ENCODE measurements at regions of chr12 and their contacts with region 1.

Region 1: GRCh38 chr12:50055831-50056638 is 1.4 kb upstream of the ASIC1 start:
- DNase-seq: peak; percentile 75 to 76
- H3K4me3 ChIP-seq: peak overlapping the region; percentile 20
- H3K4me3 Mint-ChIP-seq: peak overlapping the region; percentile 94
- H3K27ac Mint-ChIP-seq: peak overlapping the region; percentile 40
- H3K4me1 ChIP-seq: peaks cover 22% of the 10 kb centered on the region
- H3K4me1 Mint-ChIP-seq: peaks cover 24% of the 10 kb centered on the region
- H3K27me3 ChIP-seq: no peaks in the 10 kb centered on the region
- H3K27me3 Mint-ChIP-seq: peaks cover 2% of the 10 kb centered on the region
- CTCF ChIP-seq: peak; percentile 99

Region 2: GRCh38 chr12:49279706-49280159 is 776.3 kb before region 1 on chr12:
- CTCF ChIA-PET with region 1: no interaction called
- POLR2A ChIA-PET with region 1: no interaction called
- intact Hi-C with region 1: no loop called
- DNase-seq: no peak
- H3K4me3 ChIP-seq: no peak overlapping the region
- H3K4me3 Mint-ChIP-seq: no peak overlapping the region
- H3K27ac Mint-ChIP-seq: no peak overlapping the region
- H3K4me1 ChIP-seq: peaks cover 15% of the 10 kb centered on the region
- H3K4me1 Mint-ChIP-seq: peaks cover 13% of the 10 kb centered on the region
- H3K27me3 ChIP-seq: no peaks in the 10 kb centered on the region
- H3K27me3 Mint-ChIP-seq: no peaks in the 10 kb centered on the region
- CTCF ChIP-seq: no peak

Region 3: GRCh38 chr12:49776413-49776812 is 279.6 kb before region 1 on chr12:
- CTCF ChIA-PET with region 1: no interaction called
- POLR2A ChIA-PET with region 1: no interaction called
- intact Hi-C with region 1: loop called (anchors 5 kb)
- DNase-seq: peak; percentile 76 to 84
- H3K4me3 ChIP-seq: no peak overlapping the region
- H3K4me3 Mint-ChIP-seq: no peak overlapping the region
- H3K27ac Mint-ChIP-seq: peak overlapping the region; percentile 37
- H3K4me1 ChIP-seq: no peaks in the 10 kb centered on the region
- H3K4me1 Mint-ChIP-seq: peaks cover 10% of the 10 kb centered on the region
- H3K27me3 ChIP-seq: no peaks in the 10 kb centered on the region
- H3K27me3 Mint-ChIP-seq: peaks cover 8% of the 10 kb centered on the region
- CTCF ChIP-seq: peak; percentile 86 to 93

Region 4: DNA sequence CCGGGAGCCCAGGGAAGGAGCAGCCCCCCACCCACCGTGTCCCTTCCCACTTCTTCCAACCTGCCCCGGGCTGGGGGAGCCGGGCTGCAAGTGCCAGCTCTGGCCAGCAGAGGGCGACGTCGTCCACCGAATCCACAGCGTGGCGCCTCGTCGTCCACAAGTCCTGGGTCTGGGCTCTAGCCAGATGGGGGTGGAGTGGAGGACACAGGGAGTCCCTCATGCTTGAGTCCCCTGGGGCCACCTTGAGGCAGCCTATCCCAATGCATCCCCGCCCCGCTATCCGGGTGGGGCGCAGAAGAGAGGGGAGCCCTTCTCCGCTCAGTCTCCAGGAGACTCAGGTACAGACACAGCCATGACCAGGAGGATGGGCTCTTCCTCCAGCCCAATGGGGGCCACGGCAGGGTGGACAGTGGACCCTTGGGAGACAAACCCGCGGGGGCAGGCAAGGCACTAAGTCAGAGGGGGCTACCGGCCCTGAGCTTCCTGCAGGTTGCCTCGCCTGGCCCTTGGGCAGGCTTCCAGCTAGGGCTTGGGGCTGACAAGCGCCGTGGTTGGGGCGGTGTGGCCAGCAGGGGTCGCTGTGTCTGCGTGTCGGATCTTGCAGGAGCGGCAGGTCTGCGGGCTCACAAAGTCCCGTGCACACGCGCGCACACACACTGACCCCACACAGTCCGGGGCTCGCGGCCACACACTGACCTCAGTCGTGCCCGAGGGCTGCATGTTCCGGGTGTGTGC is 88.8 kb before region 1 on chr12:
- CTCF ChIA-PET with region 1: interaction called, 27 read pairs
- POLR2A ChIA-PET with region 1: no interaction called
- intact Hi-C with region 1: loop called (anchors 1 kb)
- DNase-seq: peak; percentile 88 to 92
- H3K4me3 ChIP-seq: peak overlapping the region; percentile 18
- H3K4me3 Mint-ChIP-seq: peak overlapping the region; percentile 34
- H3K27ac Mint-ChIP-seq: peak overlapping the region; percentile 33
- H3K4me1 ChIP-seq: peaks cover 20% of the 10 kb centered on the region
- H3K4me1 Mint-ChIP-seq: no peaks in the 10 kb centered on the region
- H3K27me3 ChIP-seq: no peaks in the 10 kb centered on the region
- H3K27me3 Mint-ChIP-seq: no peaks in the 10 kb centered on the region
- CTCF ChIP-seq: peak; percentile 94 to 98

Region 5: GRCh38 chr12:49982246-49983087 is 73.6 kb before region 1 on chr12:
- CTCF ChIA-PET with region 1: interaction called, 10 read pairs
- POLR2A ChIA-PET with region 1: no interaction called
- intact Hi-C with region 1: no loop called
- DNase-seq: no peak
- H3K4me3 ChIP-seq: no peak overlapping the region
- H3K4me3 Mint-ChIP-seq: no peak overlapping the region
- H3K27ac Mint-ChIP-seq: no peak overlapping the region
- H3K4me1 ChIP-seq: peaks cover 19% of the 10 kb centered on the region
- H3K4me1 Mint-ChIP-seq: peaks cover 12% of the 10 kb centered on the region
- H3K27me3 ChIP-seq: no peaks in the 10 kb centered on the region
- H3K27me3 Mint-ChIP-seq: no peaks in the 10 kb centered on the region
- CTCF ChIP-seq: no peak

Region 6: DNA sequence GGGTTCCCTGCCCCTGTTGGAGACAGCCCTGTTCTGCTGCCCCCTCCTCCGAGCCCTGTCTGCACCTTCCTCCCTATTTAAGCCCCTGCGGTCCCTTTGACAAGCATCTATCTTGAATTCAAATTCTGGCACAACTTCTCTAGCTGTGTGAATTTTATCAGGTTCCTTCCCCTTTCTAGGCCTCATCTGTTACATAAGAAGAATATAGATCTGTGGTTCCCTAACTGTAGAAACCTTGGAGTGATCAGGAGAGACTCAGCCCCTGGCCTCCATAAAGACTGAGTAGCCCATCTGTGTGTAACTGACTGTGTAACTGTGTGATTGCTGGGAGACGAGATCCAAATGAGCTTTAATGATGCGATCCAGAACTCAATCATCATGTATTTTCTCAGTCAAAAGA is 17.7 kb before region 1 on chr12:
- CTCF ChIA-PET with region 1: interaction called, 43 read pairs
- POLR2A ChIA-PET with region 1: no interaction called
- intact Hi-C with region 1: loop called (anchors 1 kb)
- DNase-seq: peak in 1 of 2 experiments; percentile 6
- H3K4me3 ChIP-seq: no peak overlapping the region
- H3K4me3 Mint-ChIP-seq: no peak overlapping the region
- H3K27ac Mint-ChIP-seq: no peak overlapping the region
- H3K4me1 ChIP-seq: peaks cover 9% of the 10 kb centered on the region
- H3K4me1 Mint-ChIP-seq: peaks cover 11% of the 10 kb centered on the region
- H3K27me3 ChIP-seq: no peaks in the 10 kb centered on the region
- H3K27me3 Mint-ChIP-seq: no peaks in the 10 kb centered on the region
- CTCF ChIP-seq: no peak

Region 7: GRCh38 chr12:50642035-50642451 is 586.0 kb after region 1 on chr12:
- CTCF ChIA-PET with region 1: no interaction called
- POLR2A ChIA-PET with region 1: no interaction called
- intact Hi-C with region 1: no loop called
- DNase-seq: no peak
- H3K4me3 ChIP-seq: no peak overlapping the region
- H3K4me3 Mint-ChIP-seq: no peak overlapping the region
- H3K27ac Mint-ChIP-seq: peak overlapping the region; percentile 24
- H3K4me1 ChIP-seq: peaks cover 11% of the 10 kb centered on the region
- H3K4me1 Mint-ChIP-seq: peaks cover 35% of the 10 kb centered on the region
- H3K27me3 ChIP-seq: no peaks in the 10 kb centered on the region
- H3K27me3 Mint-ChIP-seq: no peaks in the 10 kb centered on the region
- CTCF ChIP-seq: no peak